Pancreas (tissue), 10 donors: ENCODE measurements at regions of chr1 and their contacts with region 1.

Region 1: GRCh38 chr1:27097484-27097917 is 57.4 kb downstream of the SLC9A1 start:
- DNase-seq: peak; percentile 50 to 87 (median 80)
- ATAC-seq: peak; percentile 88 to 95 (median 90)
- H3K4me3 ChIP-seq: no peak overlapping the region
- H3K27ac ChIP-seq: no peak overlapping the region
- H3K4me1 ChIP-seq: no peaks in the 10 kb centered on the region
- H3K27me3 ChIP-seq: no peaks in the 10 kb centered on the region
- CTCF ChIP-seq: peak; percentile 92 to 98 (median 94)

Region 2: DNA sequence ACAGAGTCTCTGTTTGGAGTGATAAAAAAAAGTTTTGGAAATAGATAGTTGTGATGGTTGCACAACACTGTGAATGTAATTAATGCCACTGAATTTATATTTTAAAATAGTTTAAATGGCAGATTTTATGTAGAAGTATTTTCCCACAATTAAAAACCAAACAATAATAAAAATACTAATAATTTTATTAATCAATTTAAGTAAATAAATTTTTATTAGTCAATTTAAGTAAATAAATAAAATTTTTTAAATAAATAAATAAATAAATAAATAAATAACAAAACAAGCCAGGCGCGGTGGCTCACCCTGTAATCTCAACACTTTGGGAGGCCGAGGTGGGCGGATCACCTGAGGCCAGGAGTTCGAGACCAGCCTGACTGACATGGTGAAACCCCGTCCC is 132.3 kb before region 1 on chr1:
- intact Hi-C with region 1: loop called in 1 of 3 experiments (anchors 5 kb)
- DNase-seq: no peak
- ATAC-seq: no peak
- H3K4me3 ChIP-seq: no peak overlapping the region
- H3K27ac ChIP-seq: no peak overlapping the region
- H3K4me1 ChIP-seq: peaks cover 0 to 10% (median 8%) of the 10 kb centered on the region in 3 donors
- H3K27me3 ChIP-seq: no peaks in the 10 kb centered on the region
- CTCF ChIP-seq: no peak

Region 3: GRCh38 chr1:27044613-27045151 is 52.8 kb before region 1 on chr1:
- intact Hi-C with region 1: loop called in 2 of 3 experiments (anchors 5 kb)
- DNase-seq: peak; percentile 73 to 99 (median 92)
- ATAC-seq: peak; percentile 94 to 98 (median 96)
- H3K4me3 ChIP-seq: peak overlapping the region in 1 of 4 donors; percentile 10
- H3K27ac ChIP-seq: no peak overlapping the region
- H3K4me1 ChIP-seq: peaks cover 0 to 3% (median 0%) of the 10 kb centered on the region in 3 donors
- H3K27me3 ChIP-seq: no peaks in the 10 kb centered on the region
- CTCF ChIP-seq: peak; percentile 98 to 99 (median 98)